ENCODE measurements at regions of chr7 and their contacts with region 1.

Region 1: GRCh38 chr7:56074371-56074791 is 10.3 kb downstream of the SUMF2 start:
- DNase-seq: peak; percentile 90
- H3K4me3 Mint-ChIP-seq: no peak overlapping the region
- H3K27ac Mint-ChIP-seq: peak overlapping the region; percentile 13
- H3K4me1 Mint-ChIP-seq: peaks cover 16% of the 10 kb centered on the region
- H3K27me3 Mint-ChIP-seq: no peaks in the 10 kb centered on the region
- CTCF ChIP-seq: peak; percentile 92

Region 2: DNA sequence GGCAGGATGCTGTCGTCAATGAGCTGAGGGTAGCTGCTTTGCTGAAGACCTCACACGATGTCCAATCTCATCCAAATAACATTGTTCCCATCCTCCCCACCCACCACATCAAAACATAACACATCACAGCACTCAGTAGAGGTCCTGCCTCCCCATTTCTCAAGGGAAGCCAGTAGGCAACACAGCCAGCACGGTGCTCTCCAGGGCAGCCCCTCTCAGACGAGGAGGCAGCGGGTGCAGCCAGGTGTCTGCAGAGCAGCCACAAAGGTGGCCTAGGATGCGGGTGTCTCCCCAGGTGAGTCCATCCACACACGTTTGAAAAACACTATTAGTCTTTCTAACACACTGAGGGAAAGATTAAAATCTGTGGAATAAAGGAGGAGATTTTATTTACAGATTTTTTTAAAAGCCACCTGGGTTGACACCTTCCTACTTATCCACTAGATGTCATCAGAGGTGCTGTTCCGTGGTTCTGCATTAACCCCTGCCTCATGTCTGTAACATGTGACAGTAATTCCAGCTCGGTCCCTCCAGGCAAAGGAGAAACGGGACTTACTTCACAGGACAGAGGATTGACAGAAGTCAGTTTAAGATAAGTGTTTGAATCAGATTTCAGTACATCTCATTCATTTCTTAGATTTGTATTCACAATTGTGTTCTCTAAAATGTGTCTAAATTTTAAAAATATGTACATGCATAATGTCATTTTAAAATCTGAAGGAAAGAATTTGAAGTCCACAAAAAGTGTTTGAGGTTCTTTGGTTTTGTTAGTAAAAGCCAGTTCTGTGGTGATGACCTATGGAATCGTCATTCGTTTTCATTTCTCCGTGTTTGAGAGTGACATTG is 641.2 kb before region 1 on chr7:
- CTCF ChIA-PET with region 1: no interaction called
- POLR2A ChIA-PET with region 1: no interaction called
- intact Hi-C with region 1: loop called (anchors 10 kb)
- DNase-seq: peak; percentile 55
- H3K4me3 Mint-ChIP-seq: no peak overlapping the region
- H3K27ac Mint-ChIP-seq: no peak overlapping the region
- H3K4me1 Mint-ChIP-seq: peaks cover under 1% of the 10 kb centered on the region
- H3K27me3 Mint-ChIP-seq: no peaks in the 10 kb centered on the region
- CTCF ChIP-seq: peak; percentile 52

Region 3: DNA sequence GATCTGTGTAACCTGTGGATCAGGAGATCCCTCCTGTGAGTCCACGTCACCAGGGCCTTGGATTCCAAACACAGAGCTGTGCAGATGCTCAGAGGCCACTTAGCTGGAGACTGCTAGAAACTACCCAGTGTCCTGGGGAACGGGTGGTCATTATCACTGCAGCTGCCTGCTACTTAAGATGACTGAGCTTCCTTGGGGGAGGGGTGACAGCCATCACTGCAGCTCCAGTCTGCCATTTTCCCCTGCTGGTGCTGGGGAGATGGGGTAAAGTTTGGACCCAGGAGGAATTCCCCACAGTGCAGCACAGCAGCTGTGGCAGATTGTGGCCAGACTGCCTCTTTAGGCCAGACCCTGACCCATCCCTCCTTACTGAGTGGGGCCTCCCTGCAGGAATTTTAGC is 423.3 kb before region 1 on chr7:
- CTCF ChIA-PET with region 1: interaction called, 12 read pairs
- POLR2A ChIA-PET with region 1: no interaction called
- intact Hi-C with region 1: no loop called
- DNase-seq: no peak
- H3K4me3 Mint-ChIP-seq: no peak overlapping the region
- H3K27ac Mint-ChIP-seq: no peak overlapping the region
- H3K4me1 Mint-ChIP-seq: no peaks in the 10 kb centered on the region
- H3K27me3 Mint-ChIP-seq: no peaks in the 10 kb centered on the region
- CTCF ChIP-seq: no peak

Region 4: DNA sequence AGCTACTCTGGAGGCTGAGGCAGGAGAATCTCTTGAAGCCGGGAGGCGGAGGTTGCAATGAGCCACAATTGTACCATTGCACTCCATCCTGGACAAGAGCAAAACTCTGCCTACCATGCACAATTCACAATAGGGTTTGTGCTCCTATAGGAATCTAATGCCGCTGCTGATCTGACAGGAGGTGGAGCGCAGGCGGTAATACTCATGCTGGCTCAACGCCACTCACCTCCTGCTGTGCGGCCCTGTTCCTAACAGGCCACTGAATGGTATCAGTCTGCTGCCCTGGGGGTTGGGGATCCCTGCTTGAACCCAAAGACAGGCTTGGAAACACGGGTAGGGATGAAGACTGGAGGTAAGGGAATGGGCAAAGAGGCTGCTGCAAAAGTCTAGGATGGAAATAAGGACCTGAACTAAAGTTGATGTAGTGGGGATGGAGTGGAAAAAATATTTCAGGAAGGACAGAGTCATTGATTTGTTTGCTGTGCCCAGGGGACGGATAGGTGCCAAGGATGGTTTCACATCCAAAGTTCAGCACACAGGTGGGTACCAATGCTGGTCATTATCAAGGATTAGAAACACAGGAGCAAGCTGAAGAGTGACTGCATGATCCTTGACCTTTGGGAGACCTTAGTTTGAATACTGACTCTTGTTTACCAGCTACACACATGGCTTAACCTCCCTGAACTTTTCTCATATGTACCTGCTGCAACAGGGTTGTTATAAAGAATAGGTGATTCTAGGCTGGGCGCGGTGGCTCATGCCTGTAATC is 120.5 kb before region 1 on chr7:
- CTCF ChIA-PET with region 1: no interaction called
- POLR2A ChIA-PET with region 1: no interaction called
- intact Hi-C with region 1: no loop called
- DNase-seq: no peak
- H3K4me3 Mint-ChIP-seq: peak overlapping the region; percentile 99
- H3K27ac Mint-ChIP-seq: peak overlapping the region; percentile 12
- H3K4me1 Mint-ChIP-seq: no peaks in the 10 kb centered on the region
- H3K27me3 Mint-ChIP-seq: no peaks in the 10 kb centered on the region
- CTCF ChIP-seq: no peak

Region 5: GRCh38 chr7:56003749-56004148 is 70.6 kb before region 1 on chr7:
- CTCF ChIA-PET with region 1: interaction called, 19 read pairs
- POLR2A ChIA-PET with region 1: no interaction called
- intact Hi-C with region 1: loop called (anchors 1 kb)
- DNase-seq: no peak
- H3K4me3 Mint-ChIP-seq: no peak overlapping the region
- H3K27ac Mint-ChIP-seq: no peak overlapping the region
- H3K4me1 Mint-ChIP-seq: peaks cover 8% of the 10 kb centered on the region
- H3K27me3 Mint-ChIP-seq: no peaks in the 10 kb centered on the region
- CTCF ChIP-seq: no peak

Region 6: DNA sequence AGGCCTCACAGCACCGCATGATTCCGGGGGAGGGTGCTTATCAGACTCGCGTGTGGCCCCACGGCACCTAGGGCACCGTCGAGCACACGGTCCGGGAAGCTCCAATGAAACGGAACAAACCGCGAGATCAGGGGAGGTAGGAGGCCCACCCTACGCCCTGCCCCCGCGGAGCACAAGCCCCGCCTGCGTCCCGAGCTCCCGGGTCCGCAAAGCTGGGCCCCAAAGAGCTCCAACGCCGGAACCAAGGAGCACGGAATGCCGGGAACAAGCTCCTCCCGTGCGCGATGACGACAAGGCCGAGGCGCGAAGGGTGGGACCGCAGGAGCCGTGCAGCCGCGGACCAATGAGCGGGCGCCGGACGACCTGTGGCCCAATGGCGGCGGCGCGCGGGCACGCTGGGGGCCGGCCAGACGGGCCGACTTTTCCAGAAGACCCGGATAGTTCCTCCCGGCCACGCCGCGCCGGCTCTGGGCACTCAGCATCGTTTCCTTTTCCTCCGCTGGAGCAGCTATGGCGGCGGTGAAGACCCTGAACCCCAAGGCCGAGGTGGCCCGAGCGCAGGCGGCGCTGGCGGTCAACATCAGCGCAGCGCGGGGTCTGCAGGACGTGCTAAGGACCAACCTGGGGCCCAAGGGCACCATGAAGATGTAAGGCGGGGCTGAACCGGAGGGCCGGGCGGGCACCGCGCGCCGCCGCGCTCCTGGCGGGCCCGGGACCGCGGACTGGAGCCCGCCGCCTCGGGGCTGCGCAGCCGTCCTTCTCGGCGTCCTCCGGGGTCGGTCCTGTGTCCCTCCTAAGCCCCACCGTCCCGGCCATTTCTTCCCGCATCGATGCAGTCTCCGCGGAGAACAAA is 22.8 kb before region 1 on chr7 and contains the starts of genes CCT6A and PSPH:
- CTCF ChIA-PET with region 1: interaction called, 5 read pairs
- POLR2A ChIA-PET with region 1: interaction called, 10 read pairs
- intact Hi-C with region 1: no loop called
- DNase-seq: peak; percentile 99
- H3K4me3 Mint-ChIP-seq: peak within 1 kb of the TSS; percentile 97
- H3K27ac Mint-ChIP-seq: peak within 1 kb of the TSS; percentile 94
- H3K4me1 Mint-ChIP-seq: peaks cover 10% of the 10 kb centered on the region
- H3K27me3 Mint-ChIP-seq: no peaks in the 10 kb centered on the region
- CTCF ChIP-seq: no peak
- total RNA-seq, gene CCT6A: 208 and 222 TPM in 2 replicates
- total RNA-seq, gene PSPH: 49.4 and 56.6 TPM in 2 replicates

Region 7: GRCh38 chr7:56092789-56093531 is 18.6 kb after region 1 on chr7 and contains the start of gene PHKG1:
- CTCF ChIA-PET with region 1: interaction called, 19 read pairs
- POLR2A ChIA-PET with region 1: interaction called, 5 read pairs
- intact Hi-C with region 1: no loop called
- DNase-seq: peak; percentile 84
- H3K4me3 Mint-ChIP-seq: no peak within 1 kb of the TSS
- H3K27ac Mint-ChIP-seq: no peak within 1 kb of the TSS
- H3K4me1 Mint-ChIP-seq: peaks cover 5% of the 10 kb centered on the region
- H3K27me3 Mint-ChIP-seq: no peaks in the 10 kb centered on the region
- CTCF ChIP-seq: peak; percentile 31
- total RNA-seq, gene PHKG1: 1.2 and 2.4 TPM in 2 replicates

Measured in MCF 10A (cell line).